Gastrocnemius medialis (tissue), 4 donors: ENCODE measurements at regions of chr4 and their contacts with region 1.

Region 1: GRCh38 chr4:184384056-184384809 is 90.1 kb downstream of the IRF2 start:
- DNase-seq: peak in 1 of 2 donors; percentile 41
- ATAC-seq: peak; percentile 17 to 42
- H3K4me3 ChIP-seq: peak overlapping the region; percentile 16 to 47 (median 26)
- H3K27ac ChIP-seq: peak overlapping the region; percentile 78 to 89 (median 83)
- H3K4me1 ChIP-seq: peaks cover 57 to 58% of the 10 kb centered on the region in 2 donors
- H3K27me3 ChIP-seq: no peaks in the 10 kb centered on the region
- CTCF ChIP-seq: no peak
- POLR2A ChIP-seq: peak in 1 of 2 donors; percentile 27

Region 2: GRCh38 chr4:184343502-184344177 is 40.6 kb before region 1 on chr4:
- in situ Hi-C with region 1: no loop called
- intact Hi-C with region 1: loop called (anchors 2 kb)
- DNase-seq: peak; percentile 77 to 84
- ATAC-seq: peak; percentile 64 to 69
- H3K4me3 ChIP-seq: peak overlapping the region; percentile 56 to 82 (median 67)
- H3K27ac ChIP-seq: peak overlapping the region; percentile 91 to 97 (median 92)
- H3K4me1 ChIP-seq: peaks cover 51 to 54% of the 10 kb centered on the region in 2 donors
- H3K27me3 ChIP-seq: no peaks in the 10 kb centered on the region
- CTCF ChIP-seq: no peak
- POLR2A ChIP-seq: peak; percentile 50 to 69

Region 3: GRCh38 chr4:184362396-184362795 is 21.8 kb before region 1 on chr4:
- in situ Hi-C with region 1: no loop called
- intact Hi-C with region 1: loop called (anchors 2 kb)
- DNase-seq: no peak
- ATAC-seq: no peak
- H3K4me3 ChIP-seq: no peak overlapping the region
- H3K27ac ChIP-seq: no peak overlapping the region
- H3K4me1 ChIP-seq: peaks cover 22% of the 10 kb centered on the region in 2 donors
- H3K27me3 ChIP-seq: no peaks in the 10 kb centered on the region
- CTCF ChIP-seq: no peak
- POLR2A ChIP-seq: no peak